GM12878 (cell line): ENCODE measurements at regions of chr6 and their contacts with region 1.

Region 1: DNA sequence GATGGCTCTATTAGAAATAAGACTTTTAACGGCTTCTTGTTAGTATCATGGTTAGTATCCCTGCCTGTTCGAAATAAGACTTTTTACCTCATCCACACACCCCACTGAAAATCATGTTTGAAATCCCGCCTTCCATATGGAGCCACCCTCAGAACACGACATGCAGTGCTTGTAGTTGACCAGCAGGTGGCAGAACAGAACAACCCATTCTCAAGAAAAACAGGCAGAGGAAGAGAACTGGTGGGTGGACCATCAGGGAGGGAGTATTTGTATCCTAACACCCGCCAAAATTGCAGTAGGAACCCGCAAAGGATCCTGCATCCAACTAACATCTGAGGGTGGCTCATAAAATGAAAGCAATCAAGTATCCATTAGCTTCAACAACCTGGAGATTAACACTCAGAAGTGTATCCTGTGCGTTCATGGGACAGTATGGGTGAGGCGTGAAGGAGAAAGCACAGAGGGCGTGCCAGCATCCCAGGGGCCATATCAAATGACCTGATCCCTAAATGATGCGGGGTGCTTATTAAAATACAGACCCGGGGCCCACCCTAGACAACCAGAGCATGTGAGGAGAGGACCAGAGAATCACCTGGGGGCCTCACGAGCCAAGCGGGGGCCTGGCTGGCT is 89.6 kb upstream of the NHSL1 start:
- DNase-seq: peak; percentile 30
- ATAC-seq: peak; percentile 20
- H3K4me3 ChIP-seq: no peak overlapping the region
- H3K27ac ChIP-seq: no peak overlapping the region
- H3K4me1 ChIP-seq: peaks cover 11% of the 10 kb centered on the region; the same call in 1 of the 2 replicates
- H3K27me3 ChIP-seq: no peaks in the 10 kb centered on the region
- CTCF ChIP-seq: peak; percentile 90 to 93 (median 93); a peak in 5 of 6 replicates
- EP300 ChIP-seq: no peak
- POLR2A ChIP-seq: no peak
- RAD21 ChIP-seq: peak; percentile 96

Region 2: DNA sequence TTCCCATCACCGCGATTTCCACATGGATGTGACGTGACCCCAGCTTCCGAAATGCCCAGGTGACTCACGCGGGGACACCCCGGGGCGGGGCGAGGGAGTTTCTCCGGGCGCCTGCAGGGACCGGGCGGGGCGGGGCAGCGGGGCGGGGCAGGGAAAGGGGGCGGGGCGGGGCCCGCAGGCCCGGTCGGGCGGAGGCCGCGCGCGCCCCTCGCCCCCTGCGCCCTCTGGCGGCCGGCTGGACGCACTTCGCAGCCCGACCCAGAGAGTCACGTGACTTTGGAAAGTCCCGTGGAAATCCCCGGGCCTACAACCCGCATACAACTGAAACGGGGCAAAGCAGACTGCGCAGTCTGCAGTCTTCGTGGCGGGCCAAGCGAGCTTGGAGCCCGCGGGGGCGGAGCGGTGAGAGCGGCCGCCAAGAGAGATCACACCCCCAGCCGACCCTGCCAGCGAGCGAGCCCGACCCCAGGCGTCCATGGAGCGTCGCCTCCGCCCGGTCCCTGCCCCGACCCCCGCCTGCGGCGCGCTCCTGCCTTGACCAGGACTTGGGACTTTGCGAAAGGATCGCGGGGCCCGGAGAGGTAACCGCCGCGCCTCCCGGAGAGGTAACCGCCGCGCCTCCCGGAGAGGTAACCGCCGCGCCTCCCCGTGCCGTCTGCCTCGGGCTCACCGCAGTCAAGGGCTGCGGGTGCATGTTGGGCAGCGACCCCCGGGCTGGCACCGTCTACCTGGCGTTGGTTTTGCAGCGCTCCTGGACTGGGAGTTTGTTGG is 721.8 kb before region 1 on chr6 and contains the start of gene TNFAIP3:
- CTCF ChIA-PET with region 1: no interaction called
- POLR2A ChIA-PET with region 1: no interaction called
- RAD21 ChIA-PET with region 1: no interaction called
- SMC1A ChIA-PET with region 1: no interaction called
- in situ Hi-C with region 1: no loop called
- intact Hi-C with region 1: no loop called
- DNase-seq: peak; percentile 84
- ATAC-seq: peak; percentile 78
- H3K4me3 ChIP-seq: peak within 1 kb of the TSS; percentile 99
- H3K27ac ChIP-seq: peak within 1 kb of the TSS; percentile 72
- H3K4me1 ChIP-seq: peaks cover 5% of the 10 kb centered on the region; the same call in 1 of the 2 replicates
- H3K27me3 ChIP-seq: no peaks in the 10 kb centered on the region
- CTCF ChIP-seq: peak; percentile 63 to 83 (median 70)
- EP300 ChIP-seq: peak; percentile 64 to 90
- POLR2A ChIP-seq: peak; percentile 95
- RAD21 ChIP-seq: peak; percentile 73
- polyA plus RNA-seq, gene TNFAIP3: 18.0 to 31.5 TPM

Region 3: GRCh38 chr6:138357928-138358327 is 231.0 kb before region 1 on chr6:
- CTCF ChIA-PET with region 1: no interaction called
- POLR2A ChIA-PET with region 1: no interaction called
- RAD21 ChIA-PET with region 1: no interaction called
- SMC1A ChIA-PET with region 1: no interaction called
- in situ Hi-C with region 1: no loop called
- intact Hi-C with region 1: no loop called
- DNase-seq: no peak
- ATAC-seq: no peak
- H3K4me3 ChIP-seq: no peak overlapping the region
- H3K27ac ChIP-seq: no peak overlapping the region
- H3K4me1 ChIP-seq: no peaks in the 10 kb centered on the region
- H3K27me3 ChIP-seq: no peaks in the 10 kb centered on the region; a peak in 1 of 4 replicates
- CTCF ChIP-seq: no peak
- EP300 ChIP-seq: no peak
- POLR2A ChIP-seq: no peak
- RAD21 ChIP-seq: no peak

Region 4: GRCh38 chr6:138509371-138509770 is 79.5 kb before region 1 on chr6:
- CTCF ChIA-PET with region 1: interaction called, 70 read pairs
- POLR2A ChIA-PET with region 1: no interaction called
- RAD21 ChIA-PET with region 1: interaction called, 13 read pairs
- SMC1A ChIA-PET with region 1: interaction called, 16 read pairs
- in situ Hi-C with region 1: no loop called
- intact Hi-C with region 1: no loop called
- DNase-seq: no peak
- ATAC-seq: peak; percentile 89
- H3K4me3 ChIP-seq: no peak overlapping the region
- H3K27ac ChIP-seq: no peak overlapping the region
- H3K4me1 ChIP-seq: no peaks in the 10 kb centered on the region
- H3K27me3 ChIP-seq: no peaks in the 10 kb centered on the region
- CTCF ChIP-seq: peak; percentile 45 to 83 (median 55); a peak in 4 of 6 replicates
- EP300 ChIP-seq: no peak
- POLR2A ChIP-seq: no peak
- RAD21 ChIP-seq: peak; percentile 69

Region 5: DNA sequence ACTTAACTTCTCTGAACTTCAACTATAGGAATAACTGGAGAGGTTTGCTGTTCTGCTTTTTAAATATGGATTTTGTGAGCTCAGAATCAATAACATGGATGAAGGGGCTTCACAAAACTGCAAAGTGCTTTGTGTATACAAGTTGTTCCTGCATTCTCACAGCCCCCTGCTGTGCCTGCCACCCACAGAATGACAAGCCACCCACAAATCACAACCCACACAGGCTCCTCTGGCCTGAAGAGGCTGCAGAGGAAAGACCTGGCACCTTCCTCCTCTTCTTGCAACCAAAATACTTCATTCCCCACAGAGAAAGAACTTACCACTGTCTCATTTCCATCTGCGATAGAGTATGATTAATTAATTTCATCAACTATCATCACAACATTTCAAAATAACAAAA is 17.0 kb after region 1 on chr6:
- CTCF ChIA-PET with region 1: interaction called, 6 read pairs
- POLR2A ChIA-PET with region 1: interaction called, 3 read pairs
- RAD21 ChIA-PET with region 1: interaction called, 8 read pairs
- SMC1A ChIA-PET with region 1: interaction called, 12 read pairs
- in situ Hi-C with region 1: no loop called
- intact Hi-C with region 1: no loop called
- DNase-seq: no peak
- ATAC-seq: no peak
- H3K4me3 ChIP-seq: no peak overlapping the region
- H3K27ac ChIP-seq: no peak overlapping the region
- H3K4me1 ChIP-seq: no peaks in the 10 kb centered on the region
- H3K27me3 ChIP-seq: 0 out of 4 replicates have a peak, but pooled peaks cover 0 to 3% of the 10 kb centered on the region in 2 experiments
- CTCF ChIP-seq: no peak
- EP300 ChIP-seq: no peak
- POLR2A ChIP-seq: no peak
- RAD21 ChIP-seq: no peak

Region 6: GRCh38 chr6:138673346-138674014 is 84.6 kb after region 1 on chr6:
- CTCF ChIA-PET with region 1: interaction called, 11 read pairs
- POLR2A ChIA-PET with region 1: interaction called, 3 read pairs
- RAD21 ChIA-PET with region 1: interaction called, 3 read pairs
- SMC1A ChIA-PET with region 1: interaction called, 7 read pairs
- in situ Hi-C with region 1: no loop called
- intact Hi-C with region 1: no loop called
- DNase-seq: no peak
- ATAC-seq: no peak
- H3K4me3 ChIP-seq: no peak overlapping the region
- H3K27ac ChIP-seq: no peak overlapping the region
- H3K4me1 ChIP-seq: no peaks in the 10 kb centered on the region
- H3K27me3 ChIP-seq: no peaks in the 10 kb centered on the region
- CTCF ChIP-seq: no peak
- EP300 ChIP-seq: no peak
- POLR2A ChIP-seq: no peak
- RAD21 ChIP-seq: no peak

Region 7: GRCh38 chr6:138757136-138757535 is 168.2 kb after region 1 on chr6:
- CTCF ChIA-PET with region 1: interaction called, 418 read pairs
- POLR2A ChIA-PET with region 1: no interaction called
- RAD21 ChIA-PET with region 1: interaction called, 115 read pairs
- SMC1A ChIA-PET with region 1: interaction called, 332 read pairs
- in situ Hi-C with region 1: no loop called
- intact Hi-C with region 1: no loop called
- DNase-seq: no peak
- ATAC-seq: no peak
- H3K4me3 ChIP-seq: no peak overlapping the region
- H3K27ac ChIP-seq: no peak overlapping the region
- H3K4me1 ChIP-seq: no peaks in the 10 kb centered on the region
- H3K27me3 ChIP-seq: no peaks in the 10 kb centered on the region
- CTCF ChIP-seq: no peak
- EP300 ChIP-seq: no peak
- POLR2A ChIP-seq: no peak
- RAD21 ChIP-seq: no peak

Region 8: GRCh38 chr6:138987640-138988468 is 398.9 kb after region 1 on chr6 and contains the start of gene REPS1:
- CTCF ChIA-PET with region 1: interaction called, 3 read pairs
- POLR2A ChIA-PET with region 1: no interaction called
- RAD21 ChIA-PET with region 1: no interaction called
- SMC1A ChIA-PET with region 1: no interaction called
- in situ Hi-C with region 1: no loop called
- intact Hi-C with region 1: loop called (anchors 5 kb)
- DNase-seq: peak; percentile 40
- ATAC-seq: peak; percentile 87
- H3K4me3 ChIP-seq: peak within 1 kb of the TSS; percentile 96
- H3K27ac ChIP-seq: peak within 1 kb of the TSS; percentile 86
- H3K4me1 ChIP-seq: no peaks in the 10 kb centered on the region
- H3K27me3 ChIP-seq: no peaks in the 10 kb centered on the region
- CTCF ChIP-seq: peak; percentile 83 to 93 (median 90)
- EP300 ChIP-seq: no peak
- POLR2A ChIP-seq: peak; percentile 96
- RAD21 ChIP-seq: peak; percentile 68
- polyA plus RNA-seq, gene REPS1: 13.7 to 21.2 TPM